ENCODE measurements at regions of chr6 and their contacts with region 1.

Region 1: DNA sequence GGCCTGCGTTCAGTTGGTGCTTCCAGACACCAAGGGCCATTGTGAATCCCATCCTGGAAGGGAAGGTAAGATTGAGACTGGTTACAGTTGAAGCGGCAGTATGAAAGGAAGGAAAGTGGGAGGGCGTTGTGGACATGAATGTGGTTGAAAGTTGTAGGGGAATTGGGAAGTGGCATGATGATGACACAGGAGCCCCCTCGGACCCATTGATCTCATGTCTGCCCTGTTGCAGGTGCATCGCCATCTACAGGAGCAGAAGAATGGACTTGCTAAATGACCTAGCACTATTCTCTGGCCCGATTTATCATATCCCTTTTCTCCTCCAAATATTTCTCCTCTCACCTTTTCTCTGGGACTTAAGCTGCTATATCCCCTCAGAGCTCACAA is 5.5 kb downstream of the HLA-DQA1 start:
- DNase-seq: no peak
- ATAC-seq: no peak
- H3K4me3 ChIP-seq: no peak overlapping the region
- H3K27ac ChIP-seq: no peak overlapping the region
- H3K4me1 ChIP-seq: no peaks in the 10 kb centered on the region
- H3K27me3 ChIP-seq: no peaks in the 10 kb centered on the region
- CTCF ChIP-seq: no peak

Region 2: GRCh38 chr6:32716399-32716798 is 73.7 kb after region 1 on chr6:
- intact Hi-C with region 1: no loop called
- DNase-seq: no peak
- ATAC-seq: no peak
- H3K4me3 ChIP-seq: no peak overlapping the region
- H3K27ac ChIP-seq: no peak overlapping the region
- H3K4me1 ChIP-seq: peaks cover 0 to 7% (median 0%) of the 10 kb centered on the region in 9 donors
- H3K27me3 ChIP-seq: peaks cover 0 to 52% (median 0%) of the 10 kb centered on the region in 7 donors
- CTCF ChIP-seq: no peak

Region 3: GRCh38 chr6:32741031-32741960 is 98.6 kb after region 1 on chr6 and contains the start of gene HLA-DQA2:
- intact Hi-C with region 1: loop called in 2 of 10 experiments (anchors 5 to 10 kb)
- DNase-seq: no peak
- ATAC-seq: no peak
- H3K4me3 ChIP-seq: no peak within 1 kb of the TSS
- H3K27ac ChIP-seq: no peak within 1 kb of the TSS
- H3K4me1 ChIP-seq: no peaks in the 10 kb centered on the region
- H3K27me3 ChIP-seq: peaks cover 0 to 94% (median 13%) of the 10 kb centered on the region in 7 donors
- CTCF ChIP-seq: no peak
- total RNA-seq, gene HLA-DQA2: 0.18 to 28.1 (median 1.9) TPM in 9 of 10 donors, not detected in the other